Naive thymus-derived CD4-positive, alpha-beta T cell (primary cell): ENCODE measurements at regions of chr7 and their contacts with region 1.

Region 1: GRCh38 chr7:119270045-119270464 is 1002.9 kb upstream of the KCND2 start:
- DNase-seq: peak in 1 of 9 donors; percentile 15
- ATAC-seq: peak; percentile 60
- H3K4me3 ChIP-seq: no peak overlapping the region
- H3K4me3 Mint-ChIP-seq: no peak overlapping the region
- H3K27ac ChIP-seq: no peak overlapping the region
- H3K27ac Mint-ChIP-seq: no peak overlapping the region
- H3K4me1 ChIP-seq: no peaks in the 10 kb centered on the region
- H3K4me1 Mint-ChIP-seq: no peaks in the 10 kb centered on the region
- H3K27me3 ChIP-seq: no peaks in the 10 kb centered on the region
- H3K27me3 Mint-ChIP-seq: no peaks in the 10 kb centered on the region

Region 2: DNA sequence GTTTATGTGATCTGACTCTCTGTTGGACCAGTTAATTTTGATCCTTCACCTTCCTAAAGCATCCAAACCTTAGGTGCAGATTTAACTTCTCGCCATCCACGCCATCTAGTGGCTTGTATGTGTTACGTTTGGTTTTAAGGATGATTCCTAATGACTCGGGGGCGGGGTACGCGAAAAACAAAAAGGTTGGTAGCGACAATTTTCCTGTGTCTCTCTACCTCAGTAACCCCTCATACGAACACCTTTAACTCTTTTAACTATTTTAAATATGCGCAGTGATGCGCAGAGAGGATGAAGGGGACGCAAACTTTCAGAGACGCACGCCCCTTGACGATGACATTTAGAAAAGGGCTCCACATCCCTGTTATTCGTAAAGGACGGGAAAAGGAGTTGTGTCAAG is 1002.2 kb after region 1 on chr7:
- CTCF ChIA-PET with region 1: no interaction called
- POLR2A ChIA-PET with region 1: no interaction called
- intact Hi-C with region 1: loop called in 1 of 2 experiments (anchors 5 kb)
- DNase-seq: no peak
- ATAC-seq: no peak
- H3K4me3 ChIP-seq: no peak overlapping the region
- H3K4me3 Mint-ChIP-seq: peak overlapping the region in 2 of 10 donors; percentile 43 to 71
- H3K27ac ChIP-seq: no peak overlapping the region
- H3K27ac Mint-ChIP-seq: no peak overlapping the region
- H3K4me1 ChIP-seq: no peaks in the 10 kb centered on the region
- H3K4me1 Mint-ChIP-seq: peaks cover 0 to 8% (median 0%) of the 10 kb centered on the region in 7 donors
- H3K27me3 ChIP-seq: no peaks in the 10 kb centered on the region
- H3K27me3 Mint-ChIP-seq: peaks cover 30 to 41% (median 33%) of the 10 kb centered on the region in 5 donors

Region 3: DNA sequence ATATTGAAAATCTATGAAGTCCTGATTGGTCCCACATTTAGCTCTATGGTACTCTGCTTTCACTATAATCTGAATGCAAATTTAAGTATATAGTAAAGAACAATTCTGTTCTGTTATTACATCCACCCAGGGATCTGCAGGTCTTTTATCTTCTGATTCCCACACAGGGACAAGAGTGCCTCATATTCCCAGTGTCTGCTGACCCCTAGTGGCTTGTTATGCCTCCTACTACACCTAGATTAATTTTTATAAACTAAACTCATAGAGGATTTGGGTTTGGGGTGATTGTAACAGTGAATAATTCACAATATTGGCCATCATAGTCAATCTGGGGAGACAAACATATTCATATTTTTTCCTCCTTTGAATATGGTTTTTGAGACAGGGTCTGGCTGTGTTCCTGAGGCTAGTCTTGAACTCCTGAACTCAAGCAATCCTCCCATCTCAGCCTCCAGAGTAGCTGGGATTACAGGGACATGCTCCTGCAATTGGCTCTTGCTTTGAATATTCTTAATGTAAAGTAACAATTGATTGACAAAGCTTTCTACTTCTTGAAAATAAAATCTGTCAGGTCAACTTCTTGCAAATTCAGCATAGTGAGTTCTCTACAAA is 1285.0 kb after region 1 on chr7:
- CTCF ChIA-PET with region 1: no interaction called
- POLR2A ChIA-PET with region 1: no interaction called
- intact Hi-C with region 1: loop called in 1 of 2 experiments (anchors 2 kb)
- DNase-seq: no peak
- ATAC-seq: no peak
- H3K4me3 ChIP-seq: no peak overlapping the region
- H3K4me3 Mint-ChIP-seq: no peak overlapping the region
- H3K27ac ChIP-seq: no peak overlapping the region
- H3K27ac Mint-ChIP-seq: no peak overlapping the region
- H3K4me1 ChIP-seq: no peaks in the 10 kb centered on the region
- H3K4me1 Mint-ChIP-seq: no peaks in the 10 kb centered on the region
- H3K27me3 ChIP-seq: no peaks in the 10 kb centered on the region
- H3K27me3 Mint-ChIP-seq: no peaks in the 10 kb centered on the region

Region 4: GRCh38 chr7:120725376-120726039 is 1455.5 kb after region 1 on chr7:
- CTCF ChIA-PET with region 1: no interaction called
- POLR2A ChIA-PET with region 1: no interaction called
- intact Hi-C with region 1: loop called in 1 of 2 experiments (anchors 5 kb)
- DNase-seq: no peak
- ATAC-seq: no peak
- H3K4me3 ChIP-seq: no peak overlapping the region
- H3K4me3 Mint-ChIP-seq: no peak overlapping the region
- H3K27ac ChIP-seq: no peak overlapping the region
- H3K27ac Mint-ChIP-seq: no peak overlapping the region
- H3K4me1 ChIP-seq: no peaks in the 10 kb centered on the region
- H3K4me1 Mint-ChIP-seq: no peaks in the 10 kb centered on the region
- H3K27me3 ChIP-seq: no peaks in the 10 kb centered on the region
- H3K27me3 Mint-ChIP-seq: peaks cover 2 to 9% (median 5%) of the 10 kb centered on the region in 5 donors